Endothelial cell of umbilical vein (primary cell): ENCODE measurements at regions of chr2 and their contacts with region 1.

Region 1: DNA sequence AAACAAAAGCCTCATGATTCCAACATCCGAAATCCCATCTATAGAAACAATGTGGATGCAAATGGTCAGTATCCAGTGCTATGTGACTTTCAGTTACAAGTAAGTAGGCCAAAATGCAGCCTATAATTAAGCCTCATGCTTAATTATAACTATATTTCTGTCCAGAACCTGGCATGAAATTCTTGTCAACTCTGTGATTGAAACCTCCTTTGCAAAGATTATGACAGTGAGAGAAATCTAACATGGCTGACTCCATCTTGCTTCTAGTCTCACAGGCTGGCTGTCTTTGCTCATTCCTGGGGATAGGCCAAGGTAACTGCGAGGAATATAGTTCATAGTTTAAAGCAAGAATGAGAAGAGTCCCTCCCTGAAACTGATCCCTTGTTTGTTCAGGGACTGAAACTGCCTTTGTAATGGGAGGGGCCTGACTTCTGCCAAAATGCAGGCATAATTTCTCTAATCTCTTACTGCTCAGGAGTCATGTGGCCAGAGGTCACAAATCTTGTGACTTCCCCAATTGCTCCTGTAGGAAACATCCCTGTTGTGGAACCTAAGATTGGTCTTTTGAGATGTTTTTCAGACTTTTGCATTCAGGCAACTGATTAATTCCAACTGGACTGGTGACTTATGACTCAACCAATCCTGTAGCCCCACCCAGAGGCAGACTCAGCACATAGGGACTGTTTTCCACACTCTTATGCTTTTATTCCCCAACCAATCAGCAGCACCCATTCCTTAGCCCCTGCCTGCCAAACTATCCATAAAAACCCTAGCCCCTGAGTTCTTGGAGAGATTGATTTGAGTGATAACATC is 84.5 kb upstream of the TLK1 start:
- DNase-seq: no peak
- H3K4me3 ChIP-seq: no peak overlapping the region
- H3K27ac ChIP-seq: no peak overlapping the region
- H3K4me1 ChIP-seq: no peaks in the 10 kb centered on the region
- H3K27me3 ChIP-seq: no peaks in the 10 kb centered on the region
- CTCF ChIP-seq: no peak
- POLR2A ChIP-seq: no peak

Region 2: DNA sequence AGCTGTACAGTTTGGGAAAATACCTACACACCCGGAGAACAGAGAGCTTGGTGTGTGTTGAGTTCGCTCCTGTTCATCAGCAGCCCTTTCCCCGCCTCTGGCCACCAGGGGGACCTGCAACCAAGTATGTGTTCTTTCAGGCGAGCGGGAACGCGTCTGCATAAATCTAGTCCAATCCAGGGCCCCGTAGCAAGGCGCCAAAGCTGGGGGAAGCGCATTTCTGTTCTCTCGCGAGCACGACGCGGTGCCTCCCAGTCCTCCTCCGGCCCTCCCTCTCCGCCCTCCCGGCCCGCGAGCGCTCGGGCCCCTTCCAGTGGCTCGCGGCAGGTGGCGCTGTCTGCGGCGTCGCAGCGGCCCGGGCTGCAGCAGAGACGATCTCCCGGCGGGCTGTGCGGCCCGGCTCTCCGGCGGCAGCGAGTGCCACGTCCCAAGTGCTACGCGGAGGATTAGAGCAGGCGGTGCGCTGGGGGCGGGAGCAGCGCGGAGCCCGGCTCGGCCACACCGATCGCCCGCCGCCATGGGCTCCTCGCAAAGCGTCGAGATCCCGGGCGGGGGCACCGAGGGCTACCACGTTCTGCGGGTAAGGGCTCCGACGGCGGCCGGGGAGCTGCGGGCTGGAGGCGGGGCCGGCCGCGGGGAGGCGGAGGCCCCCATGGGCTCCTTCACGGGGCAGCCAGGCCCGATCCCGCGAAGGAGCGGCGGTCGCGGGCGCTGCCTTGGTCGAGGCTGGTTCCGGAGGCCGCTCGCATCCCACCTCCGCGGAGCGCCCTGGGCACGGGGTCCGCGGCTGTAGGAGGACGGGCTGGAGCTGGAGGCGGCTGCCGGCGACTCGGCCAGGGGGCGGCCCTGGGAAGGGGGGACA is 316.1 kb before region 1 on chr2 and contains the start of gene GORASP2:
- CTCF ChIA-PET with region 1: no interaction called
- POLR2A ChIA-PET with region 1: no interaction called
- dilution Hi-C with region 1: no loop called
- intact Hi-C with region 1: loop called (anchors 1 kb)
- DNase-seq: peak; percentile 99
- H3K4me3 ChIP-seq: peak within 1 kb of the TSS; percentile 80 to 98 (median 91)
- H3K27ac ChIP-seq: peak within 1 kb of the TSS; percentile 70
- H3K4me1 ChIP-seq: peaks cover 16% of the 10 kb centered on the region
- H3K27me3 ChIP-seq: no peaks in the 10 kb centered on the region
- CTCF ChIP-seq: peak; percentile 88 to 99
- POLR2A ChIP-seq: peak; percentile 92
- total RNA-seq, gene GORASP2: 93.7 and 104 TPM in 2 replicates

Region 3: DNA sequence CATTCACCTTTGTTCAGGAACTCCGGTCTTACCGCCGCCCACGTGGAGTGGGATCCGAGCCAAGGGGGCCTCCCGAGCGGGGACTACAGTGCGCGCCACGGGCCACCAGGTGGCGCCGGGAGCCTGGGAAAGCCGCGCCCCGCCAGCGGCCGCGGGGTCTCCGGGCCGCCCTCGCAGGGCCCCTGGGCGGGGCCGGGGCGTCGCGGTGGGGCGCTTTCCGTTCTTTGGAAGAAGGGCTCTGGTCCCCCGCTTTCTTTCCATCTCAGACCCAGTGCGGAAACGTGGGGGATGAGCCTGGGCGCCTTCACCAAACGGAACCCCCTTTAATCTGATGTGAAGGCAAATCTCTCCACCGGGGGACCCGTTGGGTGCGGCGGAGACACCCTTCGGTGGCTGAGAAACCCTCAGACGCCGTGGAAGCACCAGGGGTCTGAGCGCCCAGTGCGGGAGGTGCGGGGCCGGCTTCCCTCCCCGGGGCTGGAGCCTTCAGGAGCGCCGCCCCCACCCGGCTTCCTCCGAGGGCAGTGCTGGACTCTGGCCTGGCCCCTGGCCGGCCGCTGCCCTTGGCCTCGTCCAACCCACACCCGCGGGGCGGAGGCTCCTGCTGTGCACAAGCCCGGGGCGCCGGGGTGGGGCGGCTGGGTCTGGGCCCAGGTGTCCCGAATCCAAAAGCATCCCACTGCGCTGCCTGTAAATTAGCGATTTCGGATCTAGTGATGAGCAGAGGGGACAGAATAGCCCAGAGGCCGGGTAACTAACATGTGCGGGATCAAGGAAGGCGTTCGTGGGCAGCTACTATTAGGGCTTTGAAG is 271.5 kb before region 1 on chr2:
- CTCF ChIA-PET with region 1: no interaction called
- POLR2A ChIA-PET with region 1: no interaction called
- dilution Hi-C with region 1: no loop called
- intact Hi-C with region 1: loop called (anchors 10 kb)
- DNase-seq: peak; percentile 85
- H3K4me3 ChIP-seq: peak overlapping the region; percentile 54 to 74 (median 69)
- H3K27ac ChIP-seq: peak overlapping the region; percentile 79
- H3K4me1 ChIP-seq: peaks cover 8% of the 10 kb centered on the region
- H3K27me3 ChIP-seq: no peaks in the 10 kb centered on the region
- CTCF ChIP-seq: peak; percentile 83 to 98
- POLR2A ChIP-seq: peak; percentile 67

Region 4: GRCh38 chr2:171319164-171319810 is 74.1 kb after region 1 on chr2:
- CTCF ChIA-PET with region 1: no interaction called
- POLR2A ChIA-PET with region 1: no interaction called
- dilution Hi-C with region 1: no loop called
- intact Hi-C with region 1: no loop called
- DNase-seq: peak; percentile 86
- H3K4me3 ChIP-seq: no peak overlapping the region
- H3K27ac ChIP-seq: peak overlapping the region; percentile 32
- H3K4me1 ChIP-seq: peaks cover 24% of the 10 kb centered on the region
- H3K27me3 ChIP-seq: no peaks in the 10 kb centered on the region
- CTCF ChIP-seq: no peak
- POLR2A ChIP-seq: no peak